Motor neuron (in vitro differentiated cells): ENCODE measurements at regions of chr1 and their contacts with region 1.

Region 1: DNA sequence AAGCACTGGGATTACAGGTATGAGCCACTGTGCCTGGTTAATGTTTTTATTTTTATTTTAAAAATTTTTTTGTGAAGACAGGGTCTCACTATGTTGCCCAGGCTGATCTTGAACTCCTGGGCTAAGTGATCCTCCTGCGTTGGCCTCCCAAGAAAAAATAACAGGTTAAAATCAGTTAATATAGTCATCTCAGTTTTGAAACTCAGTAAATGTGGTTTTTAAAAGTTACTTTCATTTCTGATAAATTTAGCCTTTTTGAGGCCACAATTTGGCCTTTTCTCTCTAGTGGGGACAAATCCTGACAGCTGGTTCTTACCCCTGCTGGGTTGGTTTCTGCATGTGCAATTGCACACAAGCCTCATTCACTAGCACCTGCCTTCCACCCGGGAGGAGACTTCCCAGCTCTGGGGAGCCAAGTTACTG is 13.3 kb downstream of the PMF1 start:
- ATAC-seq: no peak
- H3K4me3 ChIP-seq: no peak overlapping the region
- H3K27ac ChIP-seq: no peak overlapping the region
- H3K4me1 ChIP-seq: no peaks in the 10 kb centered on the region

Region 2: GRCh38 chr1:156082309-156083091 is 143.6 kb before region 1 on chr1 and contains the start of gene MEX3A:
- in situ Hi-C with region 1: loop called in 5 of 9 experiments (anchors 10 to 25 kb)
- ATAC-seq: peak; percentile 79 to 84 (median 80)
- H3K4me3 ChIP-seq: peak within 1 kb of the TSS; percentile 57 to 97 (median 79)
- H3K27ac ChIP-seq: peak within 1 kb of the TSS; percentile 90
- H3K4me1 ChIP-seq: peaks cover 42 to 52% of the 10 kb centered on the region in 2 donors
- total RNA-seq, gene MEX3A: 1.2 to 92.3 (median 33.9) TPM

Region 3: DNA sequence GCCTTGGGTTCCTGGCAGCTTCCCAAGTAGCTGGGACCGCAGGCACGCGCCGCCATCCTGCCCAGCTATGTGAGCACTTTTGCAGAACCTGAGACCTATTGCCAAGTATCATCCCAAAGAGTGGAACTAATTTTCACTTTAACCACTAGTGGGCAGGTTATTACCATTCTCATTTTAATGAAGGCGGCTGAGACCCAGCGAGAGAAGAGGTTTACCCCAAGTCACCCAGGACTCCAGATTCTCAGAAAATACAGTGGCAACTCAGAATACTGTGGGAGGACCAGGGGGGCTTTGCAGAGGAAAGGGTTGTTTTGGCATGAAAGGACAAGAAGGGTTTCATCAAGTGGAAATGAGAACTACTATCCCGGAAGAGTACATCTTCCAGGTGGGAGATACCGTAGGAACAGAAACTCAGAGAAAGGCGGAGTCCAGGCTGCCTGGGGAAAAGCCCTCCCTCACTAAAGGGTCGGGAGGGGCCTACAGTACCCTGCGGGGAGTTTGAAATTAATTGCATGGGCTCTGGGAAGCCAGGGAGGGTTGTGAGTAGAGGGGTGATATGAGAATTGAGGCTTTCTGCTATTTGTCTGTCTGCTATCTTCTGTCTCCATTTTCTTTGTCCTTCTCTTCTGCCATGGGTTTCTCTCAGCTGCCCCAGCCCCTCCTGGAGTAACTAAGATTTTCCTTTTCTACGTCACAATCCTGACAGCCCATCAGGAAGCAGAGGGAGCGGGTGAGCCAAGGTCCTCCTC is 79.9 kb before region 1 on chr1:
- in situ Hi-C with region 1: loop called in 2 of 9 experiments (anchors 10 to 25 kb)
- ATAC-seq: peak; percentile 28 to 78 (median 42)
- H3K4me3 ChIP-seq: no peak overlapping the region
- H3K27ac ChIP-seq: no peak overlapping the region
- H3K4me1 ChIP-seq: peaks cover 35 to 40% of the 10 kb centered on the region in 2 donors